Activated CD4-positive, alpha-beta memory T cell treated with anti-CD3 and anti-CD28 coated beads for 36 hours (primary cell): ENCODE measurements at regions of chr2 and their contacts with region 1.

Region 1: GRCh38 chr2:97673182-97673914 is 3.8 kb downstream of the C2orf92 start:
- DNase-seq: peak; percentile 64
- H3K4me3 Mint-ChIP-seq: no peak overlapping the region
- H3K27ac Mint-ChIP-seq: peak overlapping the region; percentile 68
- H3K4me1 Mint-ChIP-seq: peaks cover 27% of the 10 kb centered on the region
- H3K27me3 Mint-ChIP-seq: no peaks in the 10 kb centered on the region

Region 2: GRCh38 chr2:97688062-97688827 is 14.9 kb after region 1 on chr2:
- CTCF ChIA-PET with region 1: no interaction called
- POLR2A ChIA-PET with region 1: interaction called, 3 read pairs
- intact Hi-C with region 1: loop called (anchors 2 kb)
- DNase-seq: peak; percentile 28
- H3K4me3 Mint-ChIP-seq: peak overlapping the region; percentile 9
- H3K27ac Mint-ChIP-seq: peak overlapping the region; percentile 84
- H3K4me1 Mint-ChIP-seq: peaks cover 13% of the 10 kb centered on the region
- H3K27me3 Mint-ChIP-seq: no peaks in the 10 kb centered on the region

Region 3: DNA sequence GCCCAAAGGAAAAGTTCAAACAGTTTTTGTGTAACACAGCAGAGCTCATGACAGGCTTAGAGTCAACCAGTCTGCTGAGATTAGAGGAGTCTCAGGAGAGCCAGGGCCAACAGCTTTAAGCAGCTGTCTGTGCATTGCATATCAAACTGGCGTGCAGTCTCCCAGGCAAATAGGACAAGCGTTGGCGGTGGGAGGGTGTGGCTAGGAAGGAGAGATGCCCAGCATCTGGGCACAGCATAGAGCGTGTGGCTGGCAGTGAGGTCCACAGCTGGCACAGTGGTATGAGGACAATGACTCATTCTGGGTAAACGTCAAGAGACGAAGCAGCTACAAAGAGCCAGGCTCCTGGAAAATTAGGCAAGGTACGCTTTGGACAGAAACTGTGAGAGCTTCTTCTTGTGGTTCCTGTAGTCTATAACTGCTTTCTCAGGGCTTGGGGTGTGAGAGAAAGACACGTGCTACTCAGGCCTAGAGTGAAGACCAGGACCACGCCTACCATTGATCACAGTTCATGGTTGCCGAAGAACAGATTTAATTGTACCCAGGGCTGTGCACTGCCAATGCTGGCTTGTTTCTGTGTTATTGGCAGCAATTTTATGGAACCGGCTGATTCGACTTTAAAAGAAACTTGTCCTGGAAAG is 54.9 kb after region 1 on chr2:
- CTCF ChIA-PET with region 1: no interaction called
- POLR2A ChIA-PET with region 1: no interaction called
- intact Hi-C with region 1: no loop called
- DNase-seq: peak; percentile 47
- H3K4me3 Mint-ChIP-seq: no peak overlapping the region
- H3K27ac Mint-ChIP-seq: peak overlapping the region; percentile 40
- H3K4me1 Mint-ChIP-seq: peaks cover 51% of the 10 kb centered on the region
- H3K27me3 Mint-ChIP-seq: no peaks in the 10 kb centered on the region